ENCODE measurements at regions of chr22 and their contacts with region 1.

Region 1: DNA sequence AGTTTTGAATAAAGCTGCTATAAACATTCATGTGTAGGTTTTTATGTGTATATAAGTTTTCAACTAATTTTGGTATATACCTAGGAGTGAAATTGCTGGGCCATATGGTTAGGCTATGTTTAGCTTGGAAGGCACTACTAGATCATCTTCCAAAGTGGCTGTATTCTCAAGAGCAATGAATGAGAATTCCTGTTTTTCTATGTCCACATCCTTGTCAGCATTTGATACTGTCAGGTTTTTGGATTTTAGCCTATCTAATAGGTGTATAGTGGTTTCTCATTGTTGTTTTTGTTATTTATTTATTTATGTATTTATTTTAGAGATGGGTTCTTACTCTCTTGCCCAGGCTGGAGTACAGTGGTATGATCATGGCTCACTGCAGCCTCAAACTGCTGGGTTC is 26.3 kb upstream of the CLTCL1 start:
- DNase-seq: no peak
- ATAC-seq: no peak
- H3K4me3 ChIP-seq: no peak overlapping the region
- H3K27ac ChIP-seq: no peak overlapping the region
- H3K4me1 ChIP-seq: no peaks in the 10 kb centered on the region
- H3K27me3 ChIP-seq: no peaks in the 10 kb centered on the region
- CTCF ChIP-seq: no peak

Region 2: DNA sequence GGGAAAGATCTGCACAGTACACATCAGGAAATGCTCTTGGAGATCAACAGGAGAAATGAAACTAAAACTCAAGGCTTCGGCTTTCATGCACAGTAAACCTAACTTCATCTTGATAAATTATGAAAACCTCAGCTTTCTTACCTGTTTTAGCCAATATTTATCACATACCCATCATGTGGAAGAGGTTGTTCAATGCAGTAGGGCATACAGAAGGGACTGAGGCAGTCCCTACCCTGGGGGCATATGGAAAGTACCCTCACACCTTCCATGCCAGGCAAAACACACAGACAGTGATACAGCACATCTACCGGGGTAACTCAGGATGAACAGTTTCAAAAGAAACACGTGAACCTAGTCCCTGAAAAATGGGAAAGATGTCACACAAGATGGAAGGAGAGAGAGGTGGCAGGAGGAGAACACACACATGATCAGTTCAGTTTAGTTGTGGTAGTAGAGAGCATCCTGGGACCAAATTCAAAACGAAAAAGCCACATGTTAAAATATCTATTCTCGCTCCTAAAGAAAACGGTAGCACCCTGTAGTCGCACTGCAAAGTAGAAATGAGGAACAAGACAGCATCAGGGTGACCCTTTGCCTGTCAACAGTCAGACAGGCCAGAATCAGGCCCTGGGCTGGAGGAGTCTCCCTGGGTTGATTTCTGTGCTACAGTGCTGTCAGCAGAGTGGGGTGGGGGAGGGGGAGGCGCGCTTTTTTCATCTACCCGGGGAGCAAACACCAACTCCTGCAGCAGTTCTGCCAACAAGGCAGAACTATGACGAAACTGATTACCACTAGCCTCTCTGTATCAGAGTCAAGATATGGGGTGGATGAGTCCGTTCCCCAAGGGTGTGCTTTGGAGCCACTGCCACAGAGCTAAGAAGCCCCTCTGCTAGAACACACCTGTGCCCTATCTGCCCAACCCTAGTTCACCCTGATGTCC is 112.4 kb after region 1 on chr22:
- CTCF ChIA-PET with region 1: no interaction called
- POLR2A ChIA-PET with region 1: interaction called, 10 read pairs
- intact Hi-C with region 1: no loop called
- DNase-seq: peak; percentile 7
- ATAC-seq: no peak
- H3K4me3 ChIP-seq: peak overlapping the region; percentile 98
- H3K27ac ChIP-seq: peak overlapping the region; percentile 52
- H3K4me1 ChIP-seq: peaks cover 24% of the 10 kb centered on the region
- H3K27me3 ChIP-seq: no peaks in the 10 kb centered on the region
- CTCF ChIP-seq: no peak

Region 3: DNA sequence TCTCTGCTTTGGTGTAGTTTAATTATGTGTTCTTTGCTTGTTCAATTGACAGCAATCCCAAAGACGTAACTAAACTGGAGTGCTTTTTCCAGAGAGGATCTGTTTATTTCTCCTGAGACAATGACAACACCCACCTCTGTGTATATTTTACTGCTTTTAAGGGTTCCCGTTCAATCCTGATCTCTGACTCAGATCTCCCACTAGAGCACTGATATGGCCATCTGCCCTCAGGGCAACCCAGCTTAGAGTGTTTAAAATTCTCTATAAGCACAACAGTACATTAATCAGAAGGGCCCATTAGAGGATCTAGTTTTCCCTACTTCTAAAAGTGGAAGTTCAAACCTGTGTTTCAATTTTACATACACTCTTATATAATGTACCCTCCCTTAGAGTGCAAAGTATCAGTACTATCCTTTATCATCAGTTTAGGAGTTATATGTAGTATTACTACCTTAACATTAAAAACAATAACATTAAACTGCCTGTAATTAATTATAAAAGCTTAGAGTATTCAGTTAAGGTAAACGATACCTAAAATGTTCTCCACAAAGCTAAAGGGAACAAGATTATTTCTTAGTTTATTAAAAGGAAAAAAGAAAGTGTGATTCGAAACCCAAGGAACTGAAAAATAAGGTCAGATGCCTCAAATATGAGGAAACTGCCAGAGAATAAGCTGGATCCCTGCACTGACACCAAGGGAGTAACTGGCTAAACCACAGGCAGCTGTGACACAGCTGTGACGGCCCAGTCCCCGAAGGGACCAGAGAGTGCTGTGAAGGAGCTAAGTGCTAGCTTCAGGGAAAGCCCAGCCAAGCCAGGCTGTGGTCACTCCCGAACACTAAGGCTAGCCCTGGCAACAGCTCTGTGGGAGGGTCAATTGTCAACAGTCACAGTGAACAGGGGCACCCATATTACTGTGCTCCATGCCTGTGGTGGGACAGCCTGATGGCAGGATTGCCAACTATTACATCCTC is 145.9 kb after region 1 on chr22:
- CTCF ChIA-PET with region 1: no interaction called
- POLR2A ChIA-PET with region 1: no interaction called
- intact Hi-C with region 1: no loop called
- DNase-seq: no peak
- ATAC-seq: no peak
- H3K4me3 ChIP-seq: no peak overlapping the region
- H3K27ac ChIP-seq: no peak overlapping the region
- H3K4me1 ChIP-seq: no peaks in the 10 kb centered on the region
- H3K27me3 ChIP-seq: no peaks in the 10 kb centered on the region
- CTCF ChIP-seq: no peak

Measured in PC-3 (cell line).